Activated CD4-positive, alpha-beta T cell treated with anti-CD3 and anti-CD28 coated beads, Interleukin-2, amount 10 ng/mL, durations not matched to agents 24 days and 14 days (primary cell): ENCODE measurements at regions of chr20 and their contacts with region 1.

Region 1: DNA sequence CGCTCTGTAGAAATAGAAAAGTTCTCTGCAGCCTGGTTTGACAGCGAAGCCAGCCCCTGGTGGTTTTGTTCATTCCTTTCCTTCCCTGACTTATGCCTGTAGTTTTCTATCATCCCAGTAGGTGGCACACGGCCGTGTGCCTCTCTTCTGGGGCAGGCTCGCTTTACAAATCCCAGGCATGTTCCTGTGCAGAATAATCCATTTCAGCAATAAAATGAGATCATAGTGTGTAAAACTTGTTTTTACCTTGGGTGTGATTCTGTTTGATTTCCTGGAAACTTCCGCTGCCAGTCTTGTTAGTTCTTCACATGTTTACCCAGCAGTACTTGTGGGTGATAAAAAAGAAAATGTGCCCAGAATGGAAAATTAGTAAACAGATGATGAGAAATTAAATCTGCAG is 7.4 kb upstream of the INSM1 start:
- DNase-seq: peak; percentile 74
- H3K4me3 Mint-ChIP-seq: no peak overlapping the region
- H3K27ac Mint-ChIP-seq: peak overlapping the region; percentile 1
- H3K4me1 Mint-ChIP-seq: peaks cover 26% of the 10 kb centered on the region
- H3K27me3 Mint-ChIP-seq: peaks cover 50% of the 10 kb centered on the region

Region 2: DNA sequence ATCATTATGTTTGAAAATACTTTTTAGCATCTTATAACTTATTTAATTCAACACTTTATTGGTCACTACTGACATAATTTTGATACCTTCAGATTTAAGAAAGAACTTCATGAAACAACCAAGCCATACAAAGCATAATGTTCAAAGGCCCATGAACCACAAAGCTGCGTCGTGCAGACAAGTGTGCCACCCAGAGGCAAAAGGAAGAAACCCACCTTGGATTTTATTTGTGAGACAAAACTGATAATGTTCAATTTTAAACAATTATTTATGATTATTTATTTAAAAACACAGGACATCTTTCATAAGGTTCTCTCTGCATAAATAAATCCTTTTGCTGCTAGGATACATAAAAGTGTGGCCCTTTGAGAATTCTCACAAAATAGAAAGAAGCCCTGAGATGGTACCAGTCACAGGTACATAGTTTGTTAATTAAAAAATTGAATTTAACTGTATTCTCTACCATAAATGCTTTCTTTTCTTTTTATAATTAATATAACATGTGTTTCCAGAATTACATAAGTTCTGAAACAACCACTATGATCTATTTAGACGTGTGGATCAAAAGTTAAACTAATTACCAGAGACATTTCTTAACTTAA is 208.2 kb after region 1 on chr20:
- intact Hi-C with region 1: loop called (anchors 1 kb)
- DNase-seq: peak; percentile 73
- H3K4me3 Mint-ChIP-seq: no peak overlapping the region
- H3K27ac Mint-ChIP-seq: no peak overlapping the region
- H3K4me1 Mint-ChIP-seq: peaks cover 12% of the 10 kb centered on the region
- H3K27me3 Mint-ChIP-seq: no peaks in the 10 kb centered on the region

Region 3: GRCh38 chr20:21105429-21106170 is 745.1 kb after region 1 on chr20:
- intact Hi-C with region 1: loop called (anchors 2 kb)
- DNase-seq: peak; percentile 66
- H3K4me3 Mint-ChIP-seq: peak overlapping the region; percentile 40
- H3K27ac Mint-ChIP-seq: no peak overlapping the region
- H3K4me1 Mint-ChIP-seq: peaks cover 25% of the 10 kb centered on the region
- H3K27me3 Mint-ChIP-seq: peaks cover 78% of the 10 kb centered on the region

Region 4: DNA sequence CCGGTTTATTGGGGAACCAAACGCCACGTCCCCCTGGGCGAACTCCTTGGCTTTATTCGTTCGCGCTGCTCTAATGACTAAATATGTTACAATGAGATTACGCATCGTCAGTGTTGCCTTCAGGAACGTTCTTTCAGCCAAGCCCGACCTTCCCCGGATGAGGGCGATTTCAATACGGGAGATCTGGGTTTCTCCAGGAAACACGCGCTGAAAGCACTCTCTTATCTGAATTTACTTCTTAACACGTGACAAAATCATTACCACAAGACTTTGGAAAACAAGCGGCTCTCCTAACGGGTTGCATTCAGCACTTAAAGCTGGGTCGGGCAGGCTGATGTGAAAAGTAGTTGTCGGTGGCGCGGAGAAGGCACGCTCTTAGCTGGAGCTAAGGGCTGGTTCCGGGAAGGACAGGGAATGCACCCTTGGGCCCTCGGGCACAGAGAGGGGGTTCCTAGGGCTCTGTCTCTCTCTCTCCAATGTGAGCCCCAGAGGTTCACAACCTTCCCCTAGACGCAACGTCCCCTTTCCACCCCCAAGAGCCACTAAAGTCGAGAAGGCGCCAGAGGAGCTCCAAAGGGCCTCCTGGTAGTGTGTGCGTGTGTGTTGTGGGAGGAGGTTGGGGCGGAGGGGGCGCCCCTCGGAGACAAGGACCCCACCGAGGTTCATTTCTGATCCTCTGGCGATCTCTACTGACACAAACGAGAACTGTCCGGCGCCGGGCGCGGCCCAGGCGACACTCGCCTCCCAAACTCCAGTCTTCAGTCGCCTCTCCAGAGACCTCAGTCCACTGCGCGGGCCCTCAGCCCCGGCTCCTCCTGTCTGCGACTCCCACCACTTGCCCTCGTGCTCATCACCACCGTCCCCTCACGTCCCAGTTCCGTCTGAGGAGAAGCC is 1160.5 kb after region 1 on chr20:
- intact Hi-C with region 1: loop called (anchors 5 kb)
- DNase-seq: peak; percentile 61
- H3K4me3 Mint-ChIP-seq: peak overlapping the region; percentile 23
- H3K27ac Mint-ChIP-seq: peak overlapping the region; percentile 80
- H3K4me1 Mint-ChIP-seq: peaks cover 18% of the 10 kb centered on the region
- H3K27me3 Mint-ChIP-seq: peaks cover 87% of the 10 kb centered on the region